ENCODE measurements at regions of chr10 and their contacts with region 1.

Region 1: DNA sequence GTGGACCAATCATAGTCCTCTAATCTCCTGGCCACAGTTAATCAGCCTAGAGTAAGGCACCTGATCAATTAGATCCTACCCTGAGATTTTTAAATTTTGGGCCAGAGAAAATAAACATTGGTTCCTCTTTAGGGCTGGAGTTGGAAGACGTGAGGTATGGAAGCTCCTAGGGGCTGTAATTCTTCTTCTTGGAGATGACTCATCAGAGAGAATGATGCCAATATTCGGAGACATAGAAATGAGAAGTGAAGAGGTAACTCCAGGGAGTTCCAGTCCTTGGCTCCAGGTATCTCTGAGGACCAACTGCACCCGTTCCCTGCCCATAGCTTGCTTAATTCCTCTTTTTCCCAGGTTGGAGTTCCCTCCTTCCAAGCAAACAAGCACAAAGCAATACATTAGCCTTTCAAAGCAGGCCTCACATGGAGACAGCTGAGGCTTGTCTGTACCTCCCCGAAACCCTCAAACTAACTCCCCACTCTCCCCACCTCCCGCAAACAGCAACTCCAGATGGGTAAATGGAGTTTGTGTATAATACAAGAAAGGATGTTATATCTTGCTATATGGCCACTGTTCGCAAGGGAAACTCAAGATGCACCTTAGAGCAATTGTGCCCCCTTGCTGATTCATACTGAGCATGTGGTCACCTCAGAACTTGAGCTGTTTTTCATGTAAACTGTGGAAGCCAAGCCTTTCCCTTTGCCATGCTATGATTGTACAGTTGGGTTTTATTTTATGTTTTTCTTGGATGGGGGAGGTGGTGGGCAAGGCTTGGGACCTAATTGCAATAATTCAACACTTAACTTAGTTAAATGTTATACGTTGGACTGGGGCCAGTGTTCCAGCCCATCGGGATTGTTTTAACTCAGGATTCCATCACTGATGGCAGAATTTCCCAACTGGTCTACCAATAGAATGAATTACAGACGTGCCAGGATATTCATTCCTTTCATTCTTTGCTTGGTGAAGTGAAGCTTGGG is 29.3 kb downstream of the PIK3AP1 start:
- DNase-seq: no peak
- H3K4me3 Mint-ChIP-seq: no peak overlapping the region
- H3K27ac Mint-ChIP-seq: no peak overlapping the region
- H3K4me1 Mint-ChIP-seq: peaks cover 21% of the 10 kb centered on the region
- H3K27me3 Mint-ChIP-seq: no peaks in the 10 kb centered on the region

Region 2: DNA sequence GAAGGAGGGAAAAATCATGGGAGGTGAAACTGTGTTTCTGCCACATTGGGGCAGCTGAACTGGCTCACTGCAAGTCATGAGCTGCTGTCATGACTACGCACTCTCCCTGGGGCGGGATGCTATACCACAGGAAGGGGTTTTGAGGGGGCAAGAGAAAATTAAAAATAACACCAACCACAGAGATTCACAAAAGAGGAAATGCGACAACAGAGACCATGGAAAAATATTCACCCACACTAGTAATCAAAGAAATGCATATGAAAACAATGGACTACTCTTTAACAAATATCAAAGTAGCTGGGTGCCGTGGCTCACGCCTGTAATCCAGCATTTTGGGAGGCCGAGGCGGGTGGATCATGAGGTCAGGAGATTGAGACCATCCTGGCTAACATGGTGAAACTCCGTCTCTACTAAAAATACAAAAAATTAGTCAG is 39.0 kb before region 1 on chr10:
- CTCF ChIA-PET with region 1: no interaction called
- POLR2A ChIA-PET with region 1: no interaction called
- intact Hi-C with region 1: loop called (anchors 5 kb)
- DNase-seq: peak; percentile 51
- H3K4me3 Mint-ChIP-seq: no peak overlapping the region
- H3K27ac Mint-ChIP-seq: no peak overlapping the region
- H3K4me1 Mint-ChIP-seq: peaks cover 37% of the 10 kb centered on the region
- H3K27me3 Mint-ChIP-seq: no peaks in the 10 kb centered on the region

Measured in activated CD4-positive, alpha-beta memory T cell treated with anti-CD3 and anti-CD28 coated beads for 36 hours (primary cell).